Panc1 (cell line): ENCODE measurements at regions of chr2 and their contacts with region 1.

Region 1: GRCh38 chr2:71331581-71332434 is at the start of gene ZNF638:
- DNase-seq: peak; percentile 78
- ATAC-seq: peak; percentile 100
- H3K4me3 ChIP-seq: peak within 1 kb of the TSS; percentile 96
- H3K27ac ChIP-seq: peak within 1 kb of the TSS; percentile 93
- H3K4me1 ChIP-seq: peaks cover 14% of the 10 kb centered on the region; the same call in 1 of the 2 replicates
- H3K27me3 ChIP-seq: no peaks in the 10 kb centered on the region
- CTCF ChIP-seq: peak; percentile 98
- total RNA-seq, gene ZNF638: 80.8 TPM

Region 2: DNA sequence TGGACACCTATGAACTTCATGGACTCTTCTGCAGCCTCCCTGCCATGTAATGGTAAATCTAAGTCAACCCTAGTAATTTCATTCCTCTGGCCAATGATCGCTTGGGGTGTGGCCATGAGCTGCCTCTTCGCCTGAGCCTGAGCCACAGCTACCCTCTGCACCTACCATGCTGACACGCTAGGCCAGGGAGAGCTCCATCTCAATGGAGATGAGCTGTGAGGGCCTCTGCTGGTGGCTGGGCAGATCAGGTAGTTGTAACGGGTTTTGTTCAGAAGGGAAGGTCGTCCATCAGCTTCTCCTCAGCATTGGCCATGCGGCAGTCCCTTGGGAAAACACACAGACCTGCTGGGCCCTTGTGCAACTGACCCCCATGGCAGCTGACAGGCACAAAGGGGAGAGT is 177.0 kb before region 1 on chr2:
- CTCF ChIA-PET with region 1: interaction called, 11 read pairs
- POLR2A ChIA-PET with region 1: no interaction called
- in situ Hi-C with region 1: no loop called
- intact Hi-C with region 1: no loop called
- DNase-seq: peak; percentile 20
- ATAC-seq: peak; percentile 62
- H3K4me3 ChIP-seq: no peak overlapping the region
- H3K27ac ChIP-seq: no peak overlapping the region
- H3K4me1 ChIP-seq: no peaks in the 10 kb centered on the region
- H3K27me3 ChIP-seq: peaks cover 2% of the 10 kb centered on the region; the same call in 1 of the 2 replicates
- CTCF ChIP-seq: peak; percentile 37